PC-9 (cell line): ENCODE measurements at regions of chr6 and their contacts with region 1.

Region 1: GRCh38 chr6:156776840-156777576 is at the start of gene ARID1B:
- DNase-seq: peak; percentile 61 to 64
- H3K4me3 ChIP-seq: peak within 1 kb of the TSS; percentile 95
- H3K27ac ChIP-seq: peak within 1 kb of the TSS; percentile 90
- H3K4me1 ChIP-seq: peaks cover 38% of the 10 kb centered on the region
- H3K27me3 ChIP-seq: no peaks in the 10 kb centered on the region
- CTCF ChIP-seq: no peak
- total RNA-seq, gene ARID1B: 38.8 and 42.8 TPM in 2 replicates

Region 2: GRCh38 chr6:155939253-155939652 is 837.8 kb before region 1 on chr6:
- CTCF ChIA-PET with region 1: no interaction called
- POLR2A ChIA-PET with region 1: no interaction called
- intact Hi-C with region 1: no loop called
- DNase-seq: no peak
- H3K4me3 ChIP-seq: no peak overlapping the region
- H3K27ac ChIP-seq: no peak overlapping the region
- H3K4me1 ChIP-seq: no peaks in the 10 kb centered on the region
- H3K27me3 ChIP-seq: no peaks in the 10 kb centered on the region
- CTCF ChIP-seq: no peak

Region 3: GRCh38 chr6:156564127-156564806 is 212.7 kb before region 1 on chr6:
- CTCF ChIA-PET with region 1: no interaction called
- POLR2A ChIA-PET with region 1: no interaction called
- intact Hi-C with region 1: loop called (anchors 5 kb)
- DNase-seq: peak in 1 of 2 experiments; percentile 59
- H3K4me3 ChIP-seq: no peak overlapping the region
- H3K27ac ChIP-seq: no peak overlapping the region
- H3K4me1 ChIP-seq: no peaks in the 10 kb centered on the region
- H3K27me3 ChIP-seq: no peaks in the 10 kb centered on the region
- CTCF ChIP-seq: peak; percentile 92

Region 4: DNA sequence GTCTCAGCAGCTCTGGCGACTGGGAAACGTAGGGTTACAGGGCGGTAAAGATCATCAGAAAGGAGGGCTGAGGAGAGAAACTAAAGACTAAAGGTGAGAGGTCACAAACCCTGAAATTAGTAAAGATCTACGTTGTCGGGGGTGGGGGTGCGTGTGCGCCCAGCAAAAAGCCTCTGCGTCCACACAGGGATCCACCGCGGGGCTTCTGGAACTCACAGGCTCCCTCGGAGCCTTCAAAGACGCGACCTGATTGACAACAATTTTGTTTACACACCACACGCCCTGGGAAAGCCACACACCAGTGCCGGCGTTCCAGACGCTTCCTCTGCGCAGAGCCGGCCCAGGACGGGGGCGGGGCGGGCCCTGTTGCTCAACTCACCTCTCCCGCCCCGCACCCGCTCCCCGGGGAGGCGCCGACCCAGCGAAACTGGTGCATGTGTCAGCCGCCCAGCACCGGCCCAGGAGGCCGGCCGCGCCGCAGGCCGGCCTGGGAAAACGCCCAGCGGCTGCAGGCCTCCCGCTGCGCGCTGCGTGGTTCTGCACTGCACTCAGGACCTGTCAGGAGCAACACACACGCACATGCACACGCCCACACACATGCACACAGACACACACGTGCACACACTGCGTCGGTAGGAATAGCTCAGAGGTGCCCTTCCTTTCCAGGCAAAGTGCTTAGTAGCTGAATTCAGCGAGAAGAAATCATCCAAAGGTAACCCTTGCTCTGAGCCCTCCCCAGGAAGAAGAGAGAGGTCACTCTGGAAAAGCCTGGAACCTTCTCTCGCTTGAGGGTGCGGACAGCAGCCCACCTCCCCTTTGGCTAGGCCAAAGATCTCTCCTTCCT is 57.1 kb before region 1 on chr6:
- CTCF ChIA-PET with region 1: no interaction called
- POLR2A ChIA-PET with region 1: no interaction called
- intact Hi-C with region 1: loop called (anchors 2 kb)
- DNase-seq: peak; percentile 83 to 87
- H3K4me3 ChIP-seq: peak overlapping the region; percentile 50; the same call in 1 of the 2 replicates
- H3K27ac ChIP-seq: peak overlapping the region; percentile 68
- H3K4me1 ChIP-seq: peaks cover 28% of the 10 kb centered on the region
- H3K27me3 ChIP-seq: no peaks in the 10 kb centered on the region
- CTCF ChIP-seq: no peak

Region 5: GRCh38 chr6:156876302-156876701 is 99.3 kb after region 1 on chr6:
- CTCF ChIA-PET with region 1: no interaction called
- POLR2A ChIA-PET with region 1: no interaction called
- intact Hi-C with region 1: no loop called
- DNase-seq: no peak
- H3K4me3 ChIP-seq: no peak overlapping the region
- H3K27ac ChIP-seq: no peak overlapping the region
- H3K4me1 ChIP-seq: no peaks in the 10 kb centered on the region
- H3K27me3 ChIP-seq: no peaks in the 10 kb centered on the region
- CTCF ChIP-seq: no peak; the same call in 1 of the 2 replicates

Region 6: GRCh38 chr6:157021344-157021992 is 244.5 kb after region 1 on chr6:
- CTCF ChIA-PET with region 1: no interaction called
- POLR2A ChIA-PET with region 1: interaction called, 10 read pairs
- intact Hi-C with region 1: loop called (anchors 5 kb)
- DNase-seq: peak; percentile 72 to 85
- H3K4me3 ChIP-seq: peak overlapping the region; percentile 96
- H3K27ac ChIP-seq: peak overlapping the region; percentile 90
- H3K4me1 ChIP-seq: peaks cover 20% of the 10 kb centered on the region; the same call in 1 of the 2 replicates
- H3K27me3 ChIP-seq: no peaks in the 10 kb centered on the region
- CTCF ChIP-seq: no peak; the same call in 1 of the 2 replicates

Region 7: DNA sequence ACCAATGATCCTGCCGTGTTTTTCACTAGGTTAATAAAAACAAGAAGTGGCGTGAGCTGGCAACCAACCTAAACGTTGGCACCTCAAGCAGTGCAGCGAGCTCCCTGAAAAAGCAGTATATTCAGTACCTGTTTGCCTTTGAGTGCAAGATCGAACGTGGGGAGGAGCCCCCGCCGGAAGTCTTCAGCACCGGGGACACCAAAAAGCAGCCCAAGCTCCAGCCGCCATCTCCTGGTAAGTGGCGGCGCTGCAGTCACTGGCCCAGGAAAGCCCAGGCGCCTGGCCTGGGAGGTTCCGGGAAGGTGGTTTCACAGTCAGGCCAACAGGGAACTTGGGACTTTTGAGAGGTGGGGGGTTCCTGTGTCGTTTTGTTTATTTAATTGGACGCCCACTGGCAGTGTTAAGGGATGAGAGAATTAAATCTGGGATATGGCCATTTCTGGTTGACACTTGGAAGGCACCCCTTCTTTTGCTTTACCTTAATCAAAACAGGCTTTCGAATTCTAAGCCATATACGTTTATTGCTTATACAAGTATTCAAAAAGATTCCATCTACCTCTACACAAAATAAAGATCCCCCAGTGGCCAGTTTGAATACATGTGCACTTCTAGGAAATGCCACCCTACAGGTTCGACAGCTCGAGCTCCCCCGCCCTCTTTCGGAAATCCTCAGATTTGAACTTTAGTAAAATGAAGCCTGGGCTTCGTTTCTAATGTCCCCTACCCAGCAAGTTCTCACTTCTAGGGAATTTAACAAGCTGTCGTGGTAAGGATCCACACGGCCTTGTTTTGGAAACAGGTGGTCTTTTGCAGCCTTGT is 407.4 kb after region 1 on chr6:
- CTCF ChIA-PET with region 1: no interaction called
- POLR2A ChIA-PET with region 1: no interaction called
- intact Hi-C with region 1: loop called (anchors 5 kb)
- DNase-seq: peak in 1 of 2 experiments; percentile 38
- H3K4me3 ChIP-seq: no peak overlapping the region
- H3K27ac ChIP-seq: no peak overlapping the region
- H3K4me1 ChIP-seq: peaks cover 48% of the 10 kb centered on the region
- H3K27me3 ChIP-seq: no peaks in the 10 kb centered on the region
- CTCF ChIP-seq: peak; percentile 72